Activated CD4-positive, alpha-beta memory T cell treated with anti-CD3 and anti-CD28 coated beads for 36 hours (primary cell): ENCODE measurements at regions of chr3 and their contacts with region 1.

Region 1: GRCh38 chr3:37308247-37308646 is 133.9 kb upstream of the LRRFIP2 start:
- DNase-seq: no peak
- H3K4me3 Mint-ChIP-seq: no peak overlapping the region
- H3K27ac Mint-ChIP-seq: no peak overlapping the region
- H3K4me1 Mint-ChIP-seq: peaks cover 15% of the 10 kb centered on the region
- H3K27me3 Mint-ChIP-seq: no peaks in the 10 kb centered on the region

Region 2: DNA sequence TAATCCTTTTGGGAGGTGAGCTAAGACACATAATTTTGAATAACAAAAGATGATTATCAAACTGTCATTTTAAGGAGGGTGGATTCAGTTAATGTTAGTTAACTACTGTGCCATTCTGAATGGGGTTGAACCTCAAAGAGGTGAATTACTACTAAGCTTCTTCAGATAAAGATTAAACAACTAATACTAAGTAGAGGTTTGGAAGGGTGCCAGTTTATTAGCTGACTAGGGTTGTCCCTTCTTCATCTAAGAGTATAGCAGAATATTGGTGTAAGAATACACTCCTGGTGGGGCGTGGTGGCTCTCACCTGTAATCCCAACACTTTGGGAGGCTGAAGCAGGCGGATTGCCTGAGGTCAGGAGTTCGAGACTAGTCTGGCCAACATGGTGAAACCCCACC is 10.8 kb before region 1 on chr3:
- CTCF ChIA-PET with region 1: interaction called, 13 read pairs
- POLR2A ChIA-PET with region 1: interaction called, 3 read pairs
- intact Hi-C with region 1: no loop called
- DNase-seq: no peak
- H3K4me3 Mint-ChIP-seq: no peak overlapping the region
- H3K27ac Mint-ChIP-seq: no peak overlapping the region
- H3K4me1 Mint-ChIP-seq: peaks cover 8% of the 10 kb centered on the region
- H3K27me3 Mint-ChIP-seq: no peaks in the 10 kb centered on the region